Naive thymus-derived CD4-positive, alpha-beta T cell (primary cell): ENCODE measurements at regions of chr17 and their contacts with region 1.

Region 1: DNA sequence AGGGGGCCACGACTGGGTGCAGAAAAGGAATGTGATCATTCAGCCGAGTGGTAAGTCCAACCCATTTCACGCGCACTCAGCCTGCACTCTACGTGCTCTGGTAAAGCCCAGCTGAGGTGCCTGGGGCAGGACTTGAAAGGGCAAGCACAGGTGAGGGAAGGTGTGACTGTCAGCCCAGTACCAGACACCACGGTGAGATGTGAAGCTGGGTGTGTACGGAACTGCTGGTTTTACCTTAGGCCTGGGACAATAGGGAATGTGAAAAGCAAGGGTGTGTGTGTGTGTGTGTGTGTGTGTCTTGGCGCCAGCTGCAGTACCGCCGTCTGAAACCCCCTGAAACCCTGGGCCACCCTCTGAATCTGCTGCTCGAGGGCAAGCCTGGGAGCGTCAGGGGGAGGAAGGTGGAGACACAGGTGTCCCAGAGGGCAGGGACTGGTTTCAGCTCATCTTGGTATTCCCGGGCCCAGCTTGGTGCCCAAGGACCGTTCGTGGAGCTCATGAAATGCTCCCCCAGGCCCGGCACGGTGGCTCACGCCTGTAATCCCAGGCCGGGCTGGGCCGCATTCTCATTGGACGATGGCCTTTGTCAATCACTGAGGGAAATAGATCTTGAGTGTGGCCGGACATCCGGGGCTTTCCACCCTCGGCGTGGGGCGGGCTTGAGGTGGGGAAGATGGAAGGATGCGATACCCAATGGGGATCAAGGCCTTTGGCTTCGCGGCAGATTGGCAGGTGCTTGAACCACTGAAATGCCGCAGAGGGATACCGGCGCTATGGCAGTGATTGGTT is 27.8 kb upstream of the ST6GALNAC1 start:
- DNase-seq: peak; percentile 90 to 99 (median 98)
- ATAC-seq: peak; percentile 99
- H3K4me3 ChIP-seq: peak overlapping the region; percentile 76
- H3K4me3 Mint-ChIP-seq: peak overlapping the region; percentile 81 to 98 (median 92)
- H3K27ac ChIP-seq: peak overlapping the region; percentile 84
- H3K27ac Mint-ChIP-seq: peak overlapping the region; percentile 88 to 99 (median 96)
- H3K4me1 ChIP-seq: peaks cover 19 to 26% of the 10 kb centered on the region in 2 donors
- H3K4me1 Mint-ChIP-seq: peaks cover 20 to 43% (median 31%) of the 10 kb centered on the region in 7 donors
- H3K27me3 ChIP-seq: no peaks in the 10 kb centered on the region
- H3K27me3 Mint-ChIP-seq: peaks cover 0 to 10% (median 0%) of the 10 kb centered on the region in 5 donors

Region 2: DNA sequence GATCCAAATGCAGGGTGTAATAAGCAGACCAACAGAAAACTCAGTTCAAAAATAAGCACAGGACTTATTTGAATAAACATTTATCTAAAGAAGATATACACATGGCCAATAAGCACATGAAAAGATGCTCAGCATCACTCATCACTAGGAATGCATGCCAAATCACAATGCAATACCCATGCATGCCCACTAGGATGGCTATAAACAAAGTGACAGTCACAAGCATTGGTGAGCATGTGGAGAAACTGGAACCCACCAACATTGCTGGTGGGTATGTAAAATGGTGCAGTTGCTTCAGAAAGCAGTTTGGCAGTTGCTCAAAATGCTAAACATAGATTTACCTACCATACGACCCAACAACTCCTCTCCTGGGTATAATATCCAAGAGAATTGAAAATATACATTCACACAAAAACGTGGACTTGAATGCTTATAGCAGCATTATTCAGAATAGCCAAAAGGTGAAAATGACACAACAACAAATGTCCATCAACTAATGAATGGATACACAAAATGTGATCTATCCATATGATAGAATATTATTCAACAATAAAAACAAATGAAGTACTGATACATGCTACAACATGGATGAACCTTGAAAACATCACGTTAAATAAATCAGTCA is 238.5 kb before region 1 on chr17:
- CTCF ChIA-PET with region 1: no interaction called
- POLR2A ChIA-PET with region 1: no interaction called
- intact Hi-C with region 1: no loop called
- DNase-seq: no peak
- ATAC-seq: peak; percentile 65
- H3K4me3 ChIP-seq: no peak overlapping the region
- H3K4me3 Mint-ChIP-seq: no peak overlapping the region
- H3K27ac ChIP-seq: no peak overlapping the region
- H3K27ac Mint-ChIP-seq: peak overlapping the region in 2 of 9 donors; percentile 10 to 65
- H3K4me1 ChIP-seq: no peaks in the 10 kb centered on the region
- H3K4me1 Mint-ChIP-seq: peaks cover 14 to 49% (median 30%) of the 10 kb centered on the region in 7 donors
- H3K27me3 ChIP-seq: no peaks in the 10 kb centered on the region
- H3K27me3 Mint-ChIP-seq: no peaks in the 10 kb centered on the region

Region 3: GRCh38 chr17:76515274-76515949 is 155.9 kb before region 1 on chr17:
- CTCF ChIA-PET with region 1: no interaction called
- POLR2A ChIA-PET with region 1: interaction called, 3 read pairs
- intact Hi-C with region 1: loop called (anchors 1 to 5 kb)
- DNase-seq: peak; percentile 62 to 94 (median 90)
- ATAC-seq: peak; percentile 90
- H3K4me3 ChIP-seq: peak overlapping the region; percentile 12
- H3K4me3 Mint-ChIP-seq: peak overlapping the region; percentile 75 to 89 (median 82)
- H3K27ac ChIP-seq: peak overlapping the region; percentile 96
- H3K27ac Mint-ChIP-seq: peak overlapping the region; percentile 95 to 100 (median 99)
- H3K4me1 ChIP-seq: peaks cover 36 to 58% of the 10 kb centered on the region in 2 donors
- H3K4me1 Mint-ChIP-seq: peaks cover 25 to 67% (median 37%) of the 10 kb centered on the region in 7 donors
- H3K27me3 ChIP-seq: no peaks in the 10 kb centered on the region
- H3K27me3 Mint-ChIP-seq: peaks cover 0 to 5% (median 0%) of the 10 kb centered on the region in 5 donors

Region 4: DNA sequence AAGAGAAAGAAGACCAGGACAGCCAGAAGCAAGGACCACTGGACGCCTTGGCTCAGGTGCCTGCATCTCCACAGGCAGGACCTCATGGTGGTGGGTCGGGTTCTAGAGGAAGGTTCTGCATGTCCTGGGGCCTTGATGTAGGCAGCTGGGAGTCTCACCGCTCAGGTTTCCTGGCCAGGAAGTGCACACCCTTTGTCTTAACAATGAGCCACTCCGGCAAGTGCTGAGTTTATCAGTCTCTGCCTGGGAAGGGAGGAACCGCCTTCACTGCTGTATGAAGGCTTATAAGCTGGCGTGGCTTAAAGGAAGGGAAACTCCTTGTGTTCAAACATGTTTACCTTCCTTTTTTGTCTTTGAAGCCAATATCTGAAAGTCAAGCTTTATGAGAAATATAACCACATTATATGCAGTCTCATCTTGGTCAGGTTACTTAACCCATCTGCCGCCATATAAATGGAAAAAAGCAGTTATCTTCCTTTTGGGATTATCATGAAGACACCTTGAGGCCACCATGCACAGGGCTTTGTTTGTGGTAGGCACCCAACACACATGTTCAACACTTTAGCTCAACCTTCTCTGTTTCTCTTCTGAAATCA is 27.7 kb before region 1 on chr17 and contains the start of gene ST6GALNAC1:
- CTCF ChIA-PET with region 1: interaction called, 3 read pairs
- POLR2A ChIA-PET with region 1: interaction called, 23 read pairs
- intact Hi-C with region 1: no loop called
- DNase-seq: peak in 7 of 9 donors; percentile 38 to 74 (median 62)
- ATAC-seq: peak; percentile 73
- H3K4me3 ChIP-seq: peak within 1 kb of the TSS; percentile 32
- H3K4me3 Mint-ChIP-seq: peak within 1 kb of the TSS; percentile 66 to 89 (median 78)
- H3K27ac ChIP-seq: peak within 1 kb of the TSS; percentile 46
- H3K27ac Mint-ChIP-seq: peak within 1 kb of the TSS; percentile 51 to 93 (median 77)
- H3K4me1 ChIP-seq: peaks cover 0 to 16% of the 10 kb centered on the region in 2 donors
- H3K4me1 Mint-ChIP-seq: peaks cover 12 to 47% (median 33%) of the 10 kb centered on the region in 7 donors
- H3K27me3 ChIP-seq: no peaks in the 10 kb centered on the region
- H3K27me3 Mint-ChIP-seq: peaks cover 0 to 20% (median 0%) of the 10 kb centered on the region in 5 donors
- total RNA-seq, gene ST6GALNAC1: 1.4 to 5.8 (median 2.0) TPM

Region 5: DNA sequence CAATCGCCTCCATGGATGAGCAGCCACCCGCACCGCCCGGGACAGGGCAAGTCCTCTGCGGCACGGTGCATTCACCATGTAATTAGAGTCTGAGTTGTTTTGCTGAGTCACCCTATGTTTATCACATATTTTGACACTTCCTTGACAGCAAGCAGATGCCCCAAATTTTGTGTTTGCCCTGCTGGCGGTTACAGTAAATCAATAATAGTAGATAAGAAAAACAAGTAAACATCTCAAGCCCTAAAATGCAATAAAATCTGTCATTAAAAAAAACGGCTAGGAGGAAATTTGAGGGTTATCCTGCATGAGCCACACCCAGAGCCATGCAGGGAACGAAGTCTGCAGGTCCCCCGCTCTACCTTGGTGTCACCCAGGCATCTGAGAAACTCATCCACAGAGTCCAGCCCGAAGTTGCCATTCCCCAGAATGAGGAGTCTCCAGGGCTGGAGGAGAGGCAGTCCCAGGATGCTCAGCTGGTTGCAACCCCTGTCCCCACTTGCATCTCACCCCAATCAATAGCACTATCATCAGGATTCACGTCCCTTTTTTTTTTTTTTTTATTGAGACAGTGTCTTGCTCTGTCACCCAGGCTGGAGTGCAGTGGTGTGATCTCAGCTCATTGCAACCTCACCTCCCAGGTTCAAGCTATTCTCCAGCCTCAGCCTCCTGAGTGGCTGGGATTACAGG is 11.2 kb before region 1 on chr17:
- CTCF ChIA-PET with region 1: no interaction called
- POLR2A ChIA-PET with region 1: interaction called, 15 read pairs
- intact Hi-C with region 1: no loop called
- DNase-seq: peak in 3 of 9 donors; percentile 5 to 18 (median 18)
- ATAC-seq: peak; percentile 80
- H3K4me3 ChIP-seq: peak overlapping the region; percentile 6
- H3K4me3 Mint-ChIP-seq: peak overlapping the region; percentile 12 to 70 (median 51)
- H3K27ac ChIP-seq: no peak overlapping the region
- H3K27ac Mint-ChIP-seq: peak overlapping the region in 3 of 9 donors; percentile 10 to 88 (median 70)
- H3K4me1 ChIP-seq: peaks cover 21 to 31% of the 10 kb centered on the region in 2 donors
- H3K4me1 Mint-ChIP-seq: peaks cover 20 to 35% (median 27%) of the 10 kb centered on the region in 7 donors
- H3K27me3 ChIP-seq: no peaks in the 10 kb centered on the region
- H3K27me3 Mint-ChIP-seq: peaks cover 0 to 10% (median 0%) of the 10 kb centered on the region in 5 donors